ENCODE measurements at regions of chr11 and their contacts with region 1.

Region 1: DNA sequence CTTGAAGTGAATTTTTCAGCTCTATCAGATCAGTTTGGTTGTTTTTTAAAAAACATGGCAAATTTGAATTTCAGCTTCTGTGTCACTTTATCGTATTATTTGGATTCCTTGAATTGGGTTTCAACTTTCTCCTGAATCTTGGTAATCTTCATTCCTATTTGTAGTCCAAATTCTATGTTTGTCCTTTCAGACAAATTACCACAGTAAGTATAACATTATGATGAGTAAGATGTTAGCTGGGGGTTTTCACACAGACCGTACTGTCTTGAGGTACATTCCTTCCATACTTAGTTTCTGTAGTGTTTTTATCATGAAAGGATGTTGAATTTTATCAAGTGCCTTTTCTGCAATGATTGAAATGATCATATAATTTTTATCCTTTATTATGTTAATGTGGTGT is 28.0 kb downstream of the OR5B17 start:
- DNase-seq: no peak
- H3K4me3 ChIP-seq: no peak overlapping the region
- H3K4me3 Mint-ChIP-seq: no peak overlapping the region
- H3K27ac ChIP-seq: no peak overlapping the region
- H3K27ac Mint-ChIP-seq: no peak overlapping the region
- H3K4me1 ChIP-seq: no peaks in the 10 kb centered on the region
- H3K4me1 Mint-ChIP-seq: no peaks in the 10 kb centered on the region
- H3K27me3 ChIP-seq: no peaks in the 10 kb centered on the region
- H3K27me3 Mint-ChIP-seq: peaks cover 13 to 16% of the 10 kb centered on the region in 2 donors

Region 2: GRCh38 chr11:58358969-58359368 is 28.1 kb after region 1 on chr11 and contains the start of gene OR5B17:
- CTCF ChIA-PET with region 1: no interaction called
- POLR2A ChIA-PET with region 1: no interaction called
- intact Hi-C with region 1: loop called (anchors 1 kb)
- DNase-seq: no peak
- H3K4me3 ChIP-seq: no peak within 1 kb of the TSS
- H3K4me3 Mint-ChIP-seq: no peak within 1 kb of the TSS
- H3K27ac ChIP-seq: no peak within 1 kb of the TSS
- H3K27ac Mint-ChIP-seq: no peak within 1 kb of the TSS
- H3K4me1 ChIP-seq: no peaks in the 10 kb centered on the region
- H3K4me1 Mint-ChIP-seq: no peaks in the 10 kb centered on the region
- H3K27me3 ChIP-seq: no peaks in the 10 kb centered on the region
- H3K27me3 Mint-ChIP-seq: peaks cover 13 to 18% of the 10 kb centered on the region in 2 donors
- total RNA-seq, gene OR5B17: not detected

Region 3: GRCh38 chr11:58428021-58428420 is 97.2 kb after region 1 on chr11 and contains the start of gene OR5B2:
- CTCF ChIA-PET with region 1: no interaction called
- POLR2A ChIA-PET with region 1: no interaction called
- intact Hi-C with region 1: no loop called
- DNase-seq: no peak
- H3K4me3 ChIP-seq: no peak within 1 kb of the TSS
- H3K4me3 Mint-ChIP-seq: no peak within 1 kb of the TSS
- H3K27ac ChIP-seq: no peak within 1 kb of the TSS
- H3K27ac Mint-ChIP-seq: no peak within 1 kb of the TSS
- H3K4me1 ChIP-seq: no peaks in the 10 kb centered on the region
- H3K4me1 Mint-ChIP-seq: no peaks in the 10 kb centered on the region
- H3K27me3 ChIP-seq: no peaks in the 10 kb centered on the region
- H3K27me3 Mint-ChIP-seq: peaks cover 0 to 7% of the 10 kb centered on the region in 2 donors
- total RNA-seq, gene OR5B2: 0.29 TPM in 1 of 2 experiments, not detected in the other